Calu3 (cell line): ENCODE measurements at regions of chr1 and their contacts with region 1.

Region 1: GRCh38 chr1:154695985-154696384 is 88.0 kb upstream of the ADAR start:
- DNase-seq: no peak
- H3K4me3 Mint-ChIP-seq: no peak overlapping the region
- H3K27ac Mint-ChIP-seq: no peak overlapping the region
- H3K4me1 Mint-ChIP-seq: no peaks in the 10 kb centered on the region
- H3K27me3 Mint-ChIP-seq: peaks cover 69% of the 10 kb centered on the region
- CTCF ChIP-seq: peak; percentile 21

Region 2: DNA sequence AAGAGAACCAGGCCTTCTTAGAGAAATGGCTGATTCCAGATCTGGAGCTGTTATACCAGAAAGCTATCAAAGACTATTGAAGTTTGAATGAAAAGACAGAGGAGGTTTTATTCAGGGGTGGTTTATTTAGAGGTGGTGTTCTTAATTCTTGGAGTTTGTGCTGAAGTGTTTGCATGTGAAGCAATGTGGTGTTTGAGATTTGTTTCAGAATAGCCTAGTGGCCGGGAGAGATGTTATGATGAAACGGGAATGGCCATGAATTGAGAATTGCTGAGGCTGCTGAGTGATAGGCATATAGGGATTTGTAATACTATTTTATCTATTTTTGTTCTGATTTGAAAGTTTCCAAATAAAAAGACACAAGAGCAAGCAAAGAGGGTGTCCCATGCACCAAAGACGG is 183.2 kb before region 1 on chr1:
- CTCF ChIA-PET with region 1: no interaction called
- intact Hi-C with region 1: no loop called
- DNase-seq: no peak
- H3K4me3 Mint-ChIP-seq: no peak overlapping the region
- H3K27ac Mint-ChIP-seq: no peak overlapping the region
- H3K4me1 Mint-ChIP-seq: no peaks in the 10 kb centered on the region
- H3K27me3 Mint-ChIP-seq: peaks cover 80% of the 10 kb centered on the region
- CTCF ChIP-seq: no peak

Region 3: DNA sequence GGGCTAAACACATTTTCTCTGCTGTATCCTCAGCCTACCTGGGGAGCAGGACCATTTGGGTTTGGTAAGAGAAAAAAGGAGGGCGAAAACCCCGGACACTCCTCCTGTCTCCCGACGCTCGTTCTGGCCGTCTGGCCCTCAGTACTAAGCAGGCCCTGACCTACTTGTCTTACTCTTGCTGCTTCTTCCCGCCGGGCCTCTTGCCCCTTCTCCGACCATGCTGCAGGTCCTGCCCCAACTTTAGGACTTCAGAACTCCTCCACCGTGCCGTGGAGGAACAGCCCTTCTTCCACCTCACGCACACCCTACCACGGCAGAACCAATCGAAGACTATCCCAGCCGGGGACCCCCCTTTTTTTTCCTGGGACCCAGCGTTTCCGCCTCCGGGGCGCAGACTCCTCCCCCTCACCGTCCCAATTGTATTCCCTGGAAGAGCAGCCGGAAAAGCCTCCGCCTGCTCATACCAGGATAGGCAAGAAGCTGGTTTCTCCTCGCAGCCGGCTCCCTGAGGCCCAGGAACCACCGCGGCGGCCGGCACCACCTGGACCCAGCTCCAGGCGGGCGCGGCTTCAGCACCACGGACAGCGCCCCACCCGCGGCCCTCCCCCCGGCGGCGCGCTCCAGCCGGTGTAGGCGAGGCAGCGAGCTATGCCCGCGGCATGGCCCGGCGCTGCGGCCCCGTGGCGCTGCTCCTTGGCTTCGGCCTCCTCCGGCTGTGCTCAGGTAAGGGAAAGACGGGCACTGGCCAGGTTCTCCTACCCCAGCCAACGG is 128.4 kb before region 1 on chr1 and contains the start of gene CHRNB2:
- CTCF ChIA-PET with region 1: no interaction called
- intact Hi-C with region 1: no loop called
- DNase-seq: peak; percentile 83
- H3K4me3 Mint-ChIP-seq: peak within 1 kb of the TSS; percentile 24
- H3K27ac Mint-ChIP-seq: no peak within 1 kb of the TSS
- H3K4me1 Mint-ChIP-seq: peaks cover 8% of the 10 kb centered on the region
- H3K27me3 Mint-ChIP-seq: peaks cover 81% of the 10 kb centered on the region
- CTCF ChIP-seq: no peak
- total RNA-seq, gene CHRNB2: 0.07 and 0.22 TPM in 2 replicates

Region 4: DNA sequence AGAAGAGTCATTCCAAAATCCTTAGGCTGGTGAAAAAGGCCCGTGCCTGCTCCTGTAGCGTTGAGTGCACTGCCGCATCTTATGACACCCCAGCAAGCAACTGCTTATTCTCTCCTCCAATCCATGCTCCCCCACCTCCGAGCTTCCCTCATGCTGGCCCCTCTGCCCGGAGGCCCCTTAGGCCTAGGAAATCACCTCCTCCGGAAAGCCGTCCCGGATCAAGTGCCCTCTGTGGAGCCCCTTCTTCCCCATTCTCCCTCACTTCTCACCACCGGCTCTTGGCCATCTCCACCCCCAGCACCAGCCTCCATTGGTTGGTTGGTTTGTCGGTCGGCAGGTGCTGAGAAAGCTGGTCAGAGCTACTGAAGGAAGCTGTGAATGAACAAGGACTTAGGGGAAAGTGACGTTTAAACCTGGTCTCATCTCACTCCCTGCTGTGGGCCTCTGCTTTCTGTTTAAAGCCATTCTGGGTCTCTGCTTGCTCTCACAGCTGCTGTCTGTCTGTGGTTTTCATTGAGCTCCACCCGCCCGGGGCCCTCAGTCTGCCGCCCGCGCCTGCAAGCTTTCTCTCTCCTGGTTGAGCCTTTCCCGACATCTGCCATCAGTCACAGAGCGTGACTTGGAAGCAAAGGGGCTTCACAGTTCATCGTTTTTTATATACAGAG is 51.9 kb after region 1 on chr1:
- CTCF ChIA-PET with region 1: no interaction called
- intact Hi-C with region 1: loop called (anchors 10 kb)
- DNase-seq: no peak
- H3K4me3 Mint-ChIP-seq: no peak overlapping the region
- H3K27ac Mint-ChIP-seq: no peak overlapping the region
- H3K4me1 Mint-ChIP-seq: no peaks in the 10 kb centered on the region
- H3K27me3 Mint-ChIP-seq: peaks cover 89% of the 10 kb centered on the region
- CTCF ChIP-seq: no peak